H1 (cell line): ENCODE measurements at regions of chr6 and their contacts with region 1.

Region 1: DNA sequence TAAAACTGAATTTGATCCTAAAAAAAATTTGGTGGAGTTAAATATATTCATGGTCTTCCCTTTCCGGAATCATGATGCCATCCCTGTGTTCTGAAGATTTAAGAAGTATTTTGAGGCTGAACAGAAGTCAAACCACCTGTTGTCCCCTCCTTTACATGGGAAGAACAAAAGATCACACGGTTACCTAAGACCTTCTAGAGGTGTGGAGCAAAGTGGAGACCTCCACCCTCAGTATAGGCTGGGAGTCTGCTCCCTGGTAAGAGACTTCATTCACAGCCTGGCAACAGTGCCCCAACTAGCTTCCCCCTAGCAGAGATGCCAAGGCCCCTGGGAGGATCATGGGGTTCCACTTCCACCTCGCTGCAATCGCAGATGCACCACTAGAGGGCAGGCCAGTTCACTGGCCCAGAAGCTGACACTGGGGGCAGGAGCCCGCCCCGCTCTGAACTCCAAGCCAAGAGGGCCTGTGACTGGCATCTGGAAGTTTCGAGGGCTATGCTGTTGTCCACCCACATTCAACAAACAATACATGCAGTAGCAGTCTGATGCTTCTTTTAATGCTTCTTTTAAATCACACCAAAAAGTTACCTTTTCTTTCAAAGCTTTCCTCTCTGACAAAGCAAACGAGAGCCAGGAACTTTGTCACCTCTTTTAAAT is 19.5 kb upstream of the UBE2J1 start:
- DNase-seq: peak in 1 of 2 experiments; percentile 92
- H3K4me3 ChIP-seq: no peak overlapping the region
- H3K27ac ChIP-seq: no peak overlapping the region
- H3K4me1 ChIP-seq: peaks cover 0 to 7% (median 4%) of the 10 kb centered on the region in 4 experiments; a peak in 4 of 7 replicates
- H3K27me3 ChIP-seq: no peaks in the 10 kb centered on the region
- CTCF ChIP-seq: peak; percentile 95 to 99 (median 98)
- EP300 ChIP-seq: no peak
- POLR2A ChIP-seq: no peak
- RAD21 ChIP-seq: peak; percentile 84 to 91

Region 2: DNA sequence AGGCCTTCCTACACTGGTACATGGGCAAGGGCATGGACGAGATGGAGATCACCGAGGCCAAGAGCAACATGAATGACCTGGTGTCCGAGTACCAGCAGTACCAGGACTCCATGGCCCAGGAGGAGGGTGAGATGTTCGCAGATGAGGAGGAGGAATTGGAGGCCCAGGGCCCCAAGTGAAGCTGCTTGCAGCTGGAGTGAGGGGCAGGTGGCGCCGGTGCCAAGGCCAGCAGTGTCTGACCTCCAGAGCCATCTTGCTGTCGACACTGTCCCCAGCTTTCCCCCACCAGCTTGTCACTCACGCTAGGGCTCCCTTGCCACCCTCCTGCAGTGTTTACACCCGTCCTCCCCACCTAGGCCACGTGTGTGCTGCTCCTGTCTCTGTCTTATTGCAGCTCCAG is 69.0 kb before region 1 on chr6:
- CTCF ChIA-PET with region 1: interaction called, 133 read pairs
- POLR2A ChIA-PET with region 1: no interaction called
- DNase-seq: no peak
- H3K4me3 ChIP-seq: no peak overlapping the region
- H3K27ac ChIP-seq: no peak overlapping the region
- H3K4me1 ChIP-seq: peaks cover 0 to 6% (median 0%) of the 10 kb centered on the region in 4 experiments; a peak in 3 of 7 replicates
- H3K27me3 ChIP-seq: no peaks in the 10 kb centered on the region
- CTCF ChIP-seq: no peak
- EP300 ChIP-seq: no peak
- POLR2A ChIP-seq: no peak
- RAD21 ChIP-seq: no peak

Region 3: DNA sequence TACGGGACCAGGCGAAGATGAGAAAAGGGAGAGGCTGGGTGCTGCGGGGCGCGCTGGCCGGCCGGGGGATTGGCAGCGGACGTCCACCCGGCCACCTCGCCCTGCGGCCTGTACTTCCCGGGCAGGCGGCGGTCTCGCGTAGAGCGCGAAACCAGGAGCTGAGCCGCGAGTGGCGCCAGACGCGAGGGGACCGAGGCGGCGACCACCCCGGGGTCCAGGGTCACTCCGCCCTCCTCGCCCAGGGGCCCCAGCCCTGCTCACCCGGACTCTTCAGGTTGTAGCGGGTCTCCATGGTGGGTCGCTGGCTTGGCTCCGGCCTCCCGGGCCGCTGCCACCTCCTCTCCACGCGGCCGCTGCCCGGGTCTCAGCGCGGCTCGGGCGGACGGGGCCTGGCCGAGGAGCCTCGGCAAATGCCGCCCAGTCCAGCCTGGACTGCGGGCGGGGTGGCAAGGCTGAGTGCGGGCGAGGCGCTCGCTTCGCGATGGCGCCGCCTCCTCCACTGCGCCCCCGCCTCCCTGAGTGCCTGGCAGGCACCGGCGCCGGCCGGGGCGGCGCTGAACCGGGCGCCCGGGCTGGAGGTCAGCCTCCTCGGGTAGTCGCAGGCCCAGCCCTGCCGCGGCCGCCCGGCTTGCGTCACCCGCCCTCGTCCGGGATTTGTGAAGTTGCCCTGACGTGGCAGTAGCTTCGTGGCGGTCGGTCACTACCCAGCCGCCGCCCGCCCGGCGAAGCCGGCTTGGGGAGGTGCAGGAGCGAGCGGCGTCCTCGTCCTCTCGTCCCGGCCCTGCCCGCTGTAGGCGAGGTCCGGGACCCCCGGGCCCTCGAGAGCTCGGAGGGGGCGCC is 19.5 kb before region 1 on chr6 and contains the start of gene UBE2J1:
- CTCF ChIA-PET with region 1: interaction called, 130 read pairs
- POLR2A ChIA-PET with region 1: interaction called, 7 read pairs
- DNase-seq: peak in 1 of 2 experiments; percentile 90
- H3K4me3 ChIP-seq: peak within 1 kb of the TSS; percentile 63 to 70 (median 67)
- H3K27ac ChIP-seq: peak within 1 kb of the TSS; percentile 19; the same call in 1 of the 2 replicates
- H3K4me1 ChIP-seq: peaks cover 0 to 4% (median 0%) of the 10 kb centered on the region in 4 experiments; a peak in 1 of 7 replicates
- H3K27me3 ChIP-seq: no peaks in the 10 kb centered on the region; a peak in 2 of 7 replicates
- CTCF ChIP-seq: no peak
- EP300 ChIP-seq: 0 out of 3 replicates have a peak, but pooled peaks of 1 of the 2 experiments have one; percentile 24
- POLR2A ChIP-seq: peak; percentile 68 to 90
- RAD21 ChIP-seq: no peak
- total RNA-seq, gene UBE2J1: 13.4 and 15.2 TPM in 2 replicates

Region 4: DNA sequence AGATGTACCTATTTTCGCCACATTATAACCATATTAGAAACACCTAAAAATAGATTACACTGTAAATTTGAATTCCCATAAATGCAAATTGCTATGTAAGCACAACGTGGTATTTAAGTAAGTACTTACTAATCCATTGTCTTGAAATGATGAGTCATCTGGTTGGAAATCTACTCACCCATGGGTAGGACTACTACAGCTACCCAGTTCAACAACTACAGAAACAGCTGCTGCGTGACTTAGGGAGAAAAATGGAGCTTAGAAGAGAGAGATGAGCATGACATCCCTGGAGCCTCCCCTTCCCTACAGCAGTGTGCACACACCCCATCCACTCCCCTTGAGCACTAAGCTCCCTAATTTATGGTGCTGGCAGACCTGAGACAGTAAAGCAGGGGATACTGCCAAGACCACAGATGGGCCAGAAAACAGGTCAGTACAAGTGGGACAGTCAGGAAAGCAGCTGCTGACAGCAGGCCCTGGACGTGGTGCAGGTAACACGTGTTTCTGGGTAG is 13.2 kb after region 1 on chr6:
- CTCF ChIA-PET with region 1: interaction called, 14 read pairs
- POLR2A ChIA-PET with region 1: no interaction called
- DNase-seq: peak in 1 of 2 experiments; percentile 37
- H3K4me3 ChIP-seq: no peak overlapping the region
- H3K27ac ChIP-seq: no peak overlapping the region
- H3K4me1 ChIP-seq: peaks cover 0 to 3% (median 1%) of the 10 kb centered on the region in 4 experiments; a peak in 1 of 7 replicates
- H3K27me3 ChIP-seq: no peaks in the 10 kb centered on the region
- CTCF ChIP-seq: no peak
- EP300 ChIP-seq: no peak
- POLR2A ChIP-seq: no peak
- RAD21 ChIP-seq: no peak

Region 5: DNA sequence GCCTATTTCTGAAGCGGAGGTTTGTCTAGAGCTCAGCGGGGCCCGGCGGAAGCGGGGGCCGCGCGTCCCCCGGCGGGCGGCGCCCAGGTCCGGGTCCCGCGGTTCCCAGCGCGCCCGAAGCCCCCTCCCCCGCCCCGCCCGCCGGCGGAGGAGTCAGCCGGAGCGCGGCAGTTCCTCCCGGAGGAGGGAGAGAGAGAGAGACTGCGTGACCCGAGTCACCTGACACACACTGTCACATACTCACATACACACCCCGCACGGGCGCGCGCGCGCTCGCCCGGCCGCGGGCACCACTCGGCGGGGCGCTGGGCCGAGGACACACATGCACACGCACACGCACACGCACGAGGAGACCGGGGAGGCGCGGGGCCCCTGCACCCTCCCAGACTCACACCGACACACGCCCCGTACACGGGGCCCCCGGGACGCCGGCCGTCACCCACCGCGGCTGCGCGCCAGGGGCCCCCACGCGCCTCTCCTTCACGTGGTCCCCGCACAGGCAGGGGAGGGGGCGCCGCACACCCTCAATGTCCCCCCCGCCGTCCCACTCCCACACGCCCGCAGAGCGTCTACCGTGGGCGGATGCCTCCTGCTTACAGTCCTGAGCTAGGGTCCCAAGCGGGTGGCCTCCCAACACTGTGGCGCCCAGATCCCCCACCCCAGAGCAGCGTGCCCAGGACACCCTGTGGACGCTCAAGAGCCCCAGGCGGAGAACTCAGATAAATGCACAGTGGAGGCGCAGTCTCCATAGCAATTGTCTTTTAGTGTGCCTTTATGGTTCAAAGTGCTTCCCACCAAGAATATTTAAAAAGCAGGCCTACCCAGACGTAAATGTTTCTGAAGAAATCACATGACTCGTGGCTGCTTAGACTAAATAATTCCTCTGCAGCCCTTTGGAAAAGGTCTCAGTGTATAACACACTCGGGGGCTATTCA is 40.4 kb after region 1 on chr6 and contains the start of gene RRAGD:
- CTCF ChIA-PET with region 1: interaction called, 20 read pairs
- POLR2A ChIA-PET with region 1: interaction called, 5 read pairs
- DNase-seq: peak in 1 of 2 experiments; percentile 67
- H3K4me3 ChIP-seq: peak within 1 kb of the TSS; percentile 63 to 98 (median 68)
- H3K27ac ChIP-seq: no peak within 1 kb of the TSS
- H3K4me1 ChIP-seq: peaks cover 10 to 11% (median 10%) of the 10 kb centered on the region in 4 experiments; a peak in 6 of 7 replicates
- H3K27me3 ChIP-seq: peaks cover 2 to 19% (median 16%) of the 10 kb centered on the region in 4 experiments
- CTCF ChIP-seq: no peak
- EP300 ChIP-seq: no peak
- POLR2A ChIP-seq: no peak
- RAD21 ChIP-seq: no peak
- total RNA-seq, gene RRAGD: 29.7 and 30.8 TPM in 2 replicates

Region 6: DNA sequence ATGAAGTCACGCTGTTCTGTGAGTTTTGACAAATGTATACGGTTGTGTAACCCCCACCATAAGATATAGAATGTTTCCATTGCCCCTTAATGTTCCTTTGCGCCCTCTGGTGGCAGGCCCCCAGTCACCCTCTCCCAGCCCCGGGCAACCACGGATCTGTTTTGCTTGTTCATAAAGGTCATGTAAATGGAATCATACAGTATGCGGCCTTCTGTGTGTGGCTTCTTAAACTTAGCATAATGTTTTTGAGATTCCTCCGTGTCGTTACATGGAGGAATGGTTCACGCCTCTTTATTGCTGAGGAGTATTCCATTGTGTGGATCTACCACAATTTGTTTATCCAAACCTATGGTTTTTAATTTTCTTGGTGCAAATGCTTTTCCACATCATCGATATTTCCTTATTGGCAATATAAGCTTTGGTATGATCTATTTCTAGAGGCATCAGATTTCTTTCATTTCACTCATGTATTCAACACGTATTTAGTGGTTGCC is 238.2 kb after region 1 on chr6:
- CTCF ChIA-PET with region 1: interaction called, 13 read pairs
- POLR2A ChIA-PET with region 1: no interaction called
- DNase-seq: peak in 1 of 2 experiments; percentile 90
- H3K4me3 ChIP-seq: no peak overlapping the region
- H3K27ac ChIP-seq: no peak overlapping the region
- H3K4me1 ChIP-seq: no peaks in the 10 kb centered on the region
- H3K27me3 ChIP-seq: no peaks in the 10 kb centered on the region
- CTCF ChIP-seq: peak; percentile 80 to 89 (median 82)
- EP300 ChIP-seq: no peak
- POLR2A ChIP-seq: no peak
- RAD21 ChIP-seq: peak; percentile 75 to 77